ENCODE measurements at regions of chr9 and their contacts with region 1.

Region 1: GRCh38 chr9:82410305-82410704 is 421.7 kb downstream of the SPATA31D1 start:
- DNase-seq: no peak
- H3K4me3 ChIP-seq: no peak overlapping the region
- H3K4me3 Mint-ChIP-seq: no peak overlapping the region
- H3K27ac Mint-ChIP-seq: peak overlapping the region; percentile 55
- H3K4me1 ChIP-seq: no peaks in the 10 kb centered on the region; the same call in 1 of the 2 replicates
- H3K4me1 Mint-ChIP-seq: peaks cover 15% of the 10 kb centered on the region
- H3K27me3 ChIP-seq: no peaks in the 10 kb centered on the region
- H3K27me3 Mint-ChIP-seq: no peaks in the 10 kb centered on the region
- CTCF ChIP-seq: no peak

Region 2: GRCh38 chr9:82320566-82320965 is 89.7 kb before region 1 on chr9:
- CTCF ChIA-PET with region 1: no interaction called
- POLR2A ChIA-PET with region 1: no interaction called
- intact Hi-C with region 1: no loop called
- DNase-seq: no peak
- H3K4me3 ChIP-seq: no peak overlapping the region
- H3K4me3 Mint-ChIP-seq: no peak overlapping the region
- H3K27ac Mint-ChIP-seq: no peak overlapping the region
- H3K4me1 ChIP-seq: no peaks in the 10 kb centered on the region
- H3K4me1 Mint-ChIP-seq: no peaks in the 10 kb centered on the region
- H3K27me3 ChIP-seq: no peaks in the 10 kb centered on the region
- H3K27me3 Mint-ChIP-seq: no peaks in the 10 kb centered on the region
- CTCF ChIP-seq: no peak

Region 3: GRCh38 chr9:82346040-82346439 is 64.3 kb before region 1 on chr9:
- CTCF ChIA-PET with region 1: no interaction called
- POLR2A ChIA-PET with region 1: no interaction called
- intact Hi-C with region 1: no loop called
- DNase-seq: no peak
- H3K4me3 ChIP-seq: no peak overlapping the region
- H3K4me3 Mint-ChIP-seq: no peak overlapping the region
- H3K27ac Mint-ChIP-seq: no peak overlapping the region
- H3K4me1 ChIP-seq: no peaks in the 10 kb centered on the region
- H3K4me1 Mint-ChIP-seq: no peaks in the 10 kb centered on the region
- H3K27me3 ChIP-seq: no peaks in the 10 kb centered on the region
- H3K27me3 Mint-ChIP-seq: no peaks in the 10 kb centered on the region
- CTCF ChIP-seq: no peak

Region 4: DNA sequence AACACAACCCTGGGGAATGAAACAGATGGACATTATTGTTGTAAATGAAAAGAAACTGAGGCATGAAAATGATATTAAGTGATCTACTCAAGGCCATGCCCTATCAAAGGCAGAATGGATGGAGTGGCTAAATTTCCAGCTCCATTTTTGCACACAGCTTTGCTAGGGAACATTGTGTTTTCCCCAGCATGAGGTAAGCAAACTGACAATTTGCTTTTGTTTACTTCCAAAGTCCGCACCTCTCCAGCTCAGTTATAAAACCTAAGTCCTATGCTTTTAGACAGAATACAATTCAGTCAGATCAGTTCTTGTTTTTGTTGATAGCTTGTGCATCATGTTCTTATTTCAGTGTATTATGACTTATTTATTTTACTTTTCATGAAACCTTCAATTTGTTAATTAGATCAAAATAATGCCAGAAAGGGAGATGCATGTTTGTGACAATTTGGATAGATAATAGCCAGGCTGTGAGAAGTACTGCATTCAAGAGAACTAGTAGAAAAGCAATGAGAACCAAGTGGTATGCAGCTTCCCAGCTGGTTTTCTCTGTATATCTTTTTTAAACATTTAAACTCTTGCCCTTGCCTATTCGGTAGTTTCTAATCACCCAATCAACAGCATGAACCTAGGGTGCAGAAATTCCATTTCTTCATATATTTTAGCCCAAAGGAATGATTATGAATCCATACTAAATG is 40.9 kb before region 1 on chr9:
- CTCF ChIA-PET with region 1: no interaction called
- POLR2A ChIA-PET with region 1: no interaction called
- intact Hi-C with region 1: loop called (anchors 2 kb)
- DNase-seq: no peak
- H3K4me3 ChIP-seq: no peak overlapping the region
- H3K4me3 Mint-ChIP-seq: no peak overlapping the region
- H3K27ac Mint-ChIP-seq: no peak overlapping the region
- H3K4me1 ChIP-seq: no peaks in the 10 kb centered on the region; the same call in 1 of the 2 replicates
- H3K4me1 Mint-ChIP-seq: peaks cover 6% of the 10 kb centered on the region
- H3K27me3 ChIP-seq: no peaks in the 10 kb centered on the region
- H3K27me3 Mint-ChIP-seq: no peaks in the 10 kb centered on the region
- CTCF ChIP-seq: no peak

Region 5: GRCh38 chr9:82475584-82476301 is 65.4 kb after region 1 on chr9:
- CTCF ChIA-PET with region 1: no interaction called
- POLR2A ChIA-PET with region 1: no interaction called
- intact Hi-C with region 1: loop called (anchors 10 kb)
- DNase-seq: no peak
- H3K4me3 ChIP-seq: no peak overlapping the region
- H3K4me3 Mint-ChIP-seq: no peak overlapping the region
- H3K27ac Mint-ChIP-seq: no peak overlapping the region
- H3K4me1 ChIP-seq: no peaks in the 10 kb centered on the region
- H3K4me1 Mint-ChIP-seq: no peaks in the 10 kb centered on the region
- H3K27me3 ChIP-seq: no peaks in the 10 kb centered on the region
- H3K27me3 Mint-ChIP-seq: no peaks in the 10 kb centered on the region
- CTCF ChIP-seq: no peak

Region 6: GRCh38 chr9:82549174-82549821 is 139.0 kb after region 1 on chr9:
- CTCF ChIA-PET with region 1: no interaction called
- POLR2A ChIA-PET with region 1: no interaction called
- intact Hi-C with region 1: no loop called
- DNase-seq: no peak
- H3K4me3 ChIP-seq: no peak overlapping the region
- H3K4me3 Mint-ChIP-seq: no peak overlapping the region
- H3K27ac Mint-ChIP-seq: no peak overlapping the region
- H3K4me1 ChIP-seq: no peaks in the 10 kb centered on the region
- H3K4me1 Mint-ChIP-seq: no peaks in the 10 kb centered on the region
- H3K27me3 ChIP-seq: no peaks in the 10 kb centered on the region
- H3K27me3 Mint-ChIP-seq: no peaks in the 10 kb centered on the region
- CTCF ChIP-seq: no peak

Region 7: GRCh38 chr9:82570226-82570625 is 159.9 kb after region 1 on chr9:
- CTCF ChIA-PET with region 1: no interaction called
- POLR2A ChIA-PET with region 1: no interaction called
- intact Hi-C with region 1: no loop called
- DNase-seq: no peak
- H3K4me3 ChIP-seq: no peak overlapping the region
- H3K4me3 Mint-ChIP-seq: no peak overlapping the region
- H3K27ac Mint-ChIP-seq: no peak overlapping the region
- H3K4me1 ChIP-seq: no peaks in the 10 kb centered on the region
- H3K4me1 Mint-ChIP-seq: no peaks in the 10 kb centered on the region
- H3K27me3 ChIP-seq: no peaks in the 10 kb centered on the region
- H3K27me3 Mint-ChIP-seq: no peaks in the 10 kb centered on the region
- CTCF ChIP-seq: no peak

Measured in Caco-2 (cell line).